CD14-positive monocyte (primary cell): ENCODE measurements at regions of chr1 and their contacts with region 1.

Region 1: DNA sequence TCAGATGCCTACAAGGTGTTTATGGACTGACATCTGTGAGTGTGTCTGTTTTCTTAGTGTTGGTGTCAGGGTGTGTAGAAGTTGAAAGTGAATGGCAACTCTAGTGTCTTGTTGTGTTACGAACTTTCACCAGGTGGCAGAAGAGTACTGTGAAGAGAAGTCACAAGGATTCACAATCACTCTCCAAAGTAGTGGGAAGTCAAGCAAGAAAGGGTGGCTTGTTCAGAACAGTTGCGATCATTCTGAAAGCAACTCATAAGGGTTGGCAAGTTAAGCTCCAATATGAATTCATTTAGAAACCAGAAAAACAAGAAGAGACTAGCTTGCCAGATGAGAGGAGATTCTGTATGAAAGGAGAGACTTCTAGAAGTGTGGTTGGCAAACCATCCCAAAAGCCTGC is 86.1 kb downstream of the FASLG start:
- DNase-seq: peak; percentile 61 to 78 (median 73)
- H3K4me3 ChIP-seq: no peak overlapping the region
- H3K4me3 Mint-ChIP-seq: peak overlapping the region in 1 of 2 donors; percentile 60
- H3K27ac ChIP-seq: no peak overlapping the region
- H3K27ac Mint-ChIP-seq: peak overlapping the region in 5 of 7 donors; percentile 62 to 86 (median 77)
- H3K4me1 ChIP-seq: peaks cover 22 to 29% of the 10 kb centered on the region in 2 donors
- H3K4me1 Mint-ChIP-seq: peaks cover 30% of the 10 kb centered on the region
- H3K27me3 ChIP-seq: no peaks in the 10 kb centered on the region
- H3K27me3 Mint-ChIP-seq: peaks cover 0 to 6% (median 2%) of the 10 kb centered on the region in 3 donors
- CTCF ChIP-seq: peak; percentile 85

Region 2: DNA sequence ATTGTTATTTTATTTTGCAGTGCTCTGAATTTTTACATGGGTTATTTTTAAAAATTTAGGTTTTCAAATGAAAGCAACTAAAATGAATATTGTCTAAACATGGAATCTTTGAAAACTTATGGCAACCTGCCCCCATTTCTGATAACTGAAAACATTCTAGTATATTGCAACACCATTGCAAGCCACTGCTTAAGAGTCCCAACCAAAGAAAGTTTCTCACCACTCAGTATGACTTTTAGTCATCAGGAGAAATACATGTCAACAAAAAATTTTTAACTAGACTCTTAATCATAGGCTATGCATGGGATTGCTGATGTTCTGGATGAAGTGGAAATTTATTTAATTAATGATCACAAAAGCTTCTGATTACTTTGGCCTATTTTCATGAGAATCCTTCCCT is 193.7 kb after region 1 on chr1:
- intact Hi-C with region 1: loop called in 1 of 2 experiments (anchors 10 kb)
- DNase-seq: no peak
- H3K4me3 ChIP-seq: no peak overlapping the region
- H3K4me3 Mint-ChIP-seq: no peak overlapping the region
- H3K27ac ChIP-seq: no peak overlapping the region
- H3K27ac Mint-ChIP-seq: no peak overlapping the region
- H3K4me1 ChIP-seq: peaks cover 11 to 17% of the 10 kb centered on the region in 2 donors
- H3K4me1 Mint-ChIP-seq: peaks cover 22% of the 10 kb centered on the region
- H3K27me3 ChIP-seq: no peaks in the 10 kb centered on the region
- H3K27me3 Mint-ChIP-seq: peaks cover 0 to 3% (median 0%) of the 10 kb centered on the region in 3 donors
- CTCF ChIP-seq: no peak

Region 3: DNA sequence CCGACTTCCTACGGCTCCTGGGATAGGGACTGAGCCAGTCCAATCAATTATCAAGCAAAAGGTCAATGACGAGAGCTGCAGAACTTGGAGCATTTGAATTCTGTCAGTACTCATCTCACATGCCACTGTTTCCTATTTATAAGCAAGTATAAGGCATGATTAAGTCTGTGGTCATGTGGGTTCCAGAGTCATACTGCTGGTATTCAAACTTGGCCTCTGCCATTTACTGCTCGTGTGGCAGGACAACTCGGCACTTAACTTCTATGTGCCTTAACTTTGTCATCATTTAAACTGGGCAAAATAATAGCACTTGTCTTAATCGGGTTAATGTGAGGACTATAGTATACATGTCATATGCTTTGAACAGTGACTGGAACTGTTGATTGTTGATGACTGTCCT is 350.6 kb after region 1 on chr1:
- intact Hi-C with region 1: no loop called
- DNase-seq: no peak
- H3K4me3 ChIP-seq: no peak overlapping the region
- H3K4me3 Mint-ChIP-seq: no peak overlapping the region
- H3K27ac ChIP-seq: no peak overlapping the region
- H3K27ac Mint-ChIP-seq: no peak overlapping the region
- H3K4me1 ChIP-seq: peaks cover 5 to 10% of the 10 kb centered on the region in 2 donors
- H3K4me1 Mint-ChIP-seq: peaks cover 9% of the 10 kb centered on the region
- H3K27me3 ChIP-seq: no peaks in the 10 kb centered on the region
- H3K27me3 Mint-ChIP-seq: peaks cover 0 to 3% (median 0%) of the 10 kb centered on the region in 3 donors
- CTCF ChIP-seq: no peak

Region 4: DNA sequence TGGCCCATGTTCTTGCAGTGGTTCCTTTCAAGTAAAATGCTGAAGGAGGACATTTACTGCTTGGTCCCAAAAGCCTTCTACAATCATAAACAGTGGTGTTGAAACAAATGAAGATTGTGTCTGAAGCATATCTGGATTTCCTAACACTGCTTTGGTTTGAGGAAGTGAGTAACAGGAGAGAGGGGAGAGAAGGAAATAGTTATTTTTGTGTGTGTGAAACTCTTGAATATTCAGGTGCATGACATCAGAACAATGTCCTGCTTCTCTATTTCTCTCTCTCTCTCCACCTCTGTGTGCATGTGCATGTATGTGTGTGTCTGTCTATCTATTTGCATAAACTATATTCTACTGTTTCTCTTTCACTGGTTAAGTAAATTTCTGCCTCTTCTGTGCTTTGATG is 367.1 kb after region 1 on chr1:
- intact Hi-C with region 1: loop called in 1 of 2 experiments (anchors 10 kb)
- DNase-seq: peak; percentile 84 to 91 (median 85)
- H3K4me3 ChIP-seq: no peak overlapping the region
- H3K4me3 Mint-ChIP-seq: peak overlapping the region in 1 of 2 donors; percentile 64
- H3K27ac ChIP-seq: peak overlapping the region in 1 of 2 donors; percentile 83
- H3K27ac Mint-ChIP-seq: peak overlapping the region; percentile 68 to 93 (median 87)
- H3K4me1 ChIP-seq: peaks cover 32 to 48% of the 10 kb centered on the region in 2 donors
- H3K4me1 Mint-ChIP-seq: peaks cover 39% of the 10 kb centered on the region
- H3K27me3 ChIP-seq: no peaks in the 10 kb centered on the region
- H3K27me3 Mint-ChIP-seq: peaks cover 0 to 2% (median 0%) of the 10 kb centered on the region in 3 donors
- CTCF ChIP-seq: no peak

Region 5: DNA sequence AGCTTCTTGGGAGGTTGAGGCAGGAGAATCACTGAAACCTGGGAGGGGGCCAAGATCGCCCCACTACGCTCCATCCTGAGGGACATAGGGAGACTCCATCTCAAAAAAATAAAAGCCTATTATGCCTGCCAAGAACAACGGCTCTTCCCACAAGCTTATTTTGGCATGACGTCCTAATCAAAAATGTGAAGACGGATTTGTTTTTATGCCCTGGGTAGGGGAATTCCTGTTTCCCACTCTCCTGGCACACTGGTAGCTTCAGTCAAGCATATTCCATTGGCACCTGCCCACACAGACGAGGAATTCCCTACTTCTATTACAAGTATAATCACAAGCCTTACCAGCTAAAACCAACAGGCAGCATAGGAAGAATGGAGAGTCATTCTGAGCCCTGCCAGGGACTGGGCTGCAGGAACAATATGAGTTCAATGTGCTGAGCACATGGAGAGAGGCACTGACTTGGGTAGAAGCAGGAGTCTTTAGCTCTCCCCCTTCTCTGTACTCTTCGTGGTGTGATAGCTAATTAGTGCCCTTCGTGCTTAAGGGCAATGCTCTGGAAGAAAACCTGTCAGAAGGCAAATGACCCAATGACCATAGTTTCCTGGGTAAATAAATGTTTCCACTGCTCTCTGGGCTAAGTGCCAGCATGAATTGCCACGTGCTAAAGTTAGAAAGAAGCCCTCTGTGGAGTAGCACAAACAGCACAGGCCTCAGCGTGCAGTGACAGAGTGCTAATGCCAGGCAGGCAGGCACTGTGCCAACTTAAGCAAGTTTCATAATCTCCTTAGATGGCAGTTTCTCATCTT is 445.3 kb after region 1 on chr1:
- intact Hi-C with region 1: loop called in 1 of 2 experiments (anchors 10 kb)
- DNase-seq: peak; percentile 33 to 56 (median 42)
- H3K4me3 ChIP-seq: no peak overlapping the region
- H3K4me3 Mint-ChIP-seq: no peak overlapping the region
- H3K27ac ChIP-seq: peak overlapping the region in 1 of 2 donors; percentile 52
- H3K27ac Mint-ChIP-seq: peak overlapping the region in 5 of 7 donors; percentile 45 to 77 (median 72)
- H3K4me1 ChIP-seq: peaks cover 17 to 22% of the 10 kb centered on the region in 2 donors
- H3K4me1 Mint-ChIP-seq: peaks cover 32% of the 10 kb centered on the region
- H3K27me3 ChIP-seq: no peaks in the 10 kb centered on the region
- H3K27me3 Mint-ChIP-seq: no peaks in the 10 kb centered on the region
- CTCF ChIP-seq: no peak

Region 6: GRCh38 chr1:173420330-173420806 is 675.4 kb after region 1 on chr1:
- intact Hi-C with region 1: loop called (anchors 5 to 10 kb)
- DNase-seq: peak; percentile 72 to 83 (median 73)
- H3K4me3 ChIP-seq: no peak overlapping the region
- H3K4me3 Mint-ChIP-seq: peak overlapping the region in 1 of 2 donors; percentile 58
- H3K27ac ChIP-seq: no peak overlapping the region
- H3K27ac Mint-ChIP-seq: peak overlapping the region in 3 of 7 donors; percentile 51 to 79 (median 62)
- H3K4me1 ChIP-seq: peaks cover 38 to 47% of the 10 kb centered on the region in 2 donors
- H3K4me1 Mint-ChIP-seq: peaks cover 58% of the 10 kb centered on the region
- H3K27me3 ChIP-seq: no peaks in the 10 kb centered on the region
- H3K27me3 Mint-ChIP-seq: peaks cover 0 to 3% (median 0%) of the 10 kb centered on the region in 3 donors
- CTCF ChIP-seq: peak; percentile 91

Region 7: GRCh38 chr1:173824331-173825081 is 1079.5 kb after region 1 on chr1 and contains the starts of genes CENPL and DARS2:
- intact Hi-C with region 1: loop called (anchors 5 kb)
- DNase-seq: peak; percentile 93 to 97 (median 94)
- H3K4me3 ChIP-seq: peak within 1 kb of the TSS; percentile 70 to 99 (median 92)
- H3K4me3 Mint-ChIP-seq: peak within 1 kb of the TSS; percentile 99
- H3K27ac ChIP-seq: peak within 1 kb of the TSS; percentile 91 to 93
- H3K27ac Mint-ChIP-seq: peak within 1 kb of the TSS; percentile 97 to 100 (median 99)
- H3K4me1 ChIP-seq: peaks cover 15 to 26% of the 10 kb centered on the region in 2 donors
- H3K4me1 Mint-ChIP-seq: peaks cover 39% of the 10 kb centered on the region
- H3K27me3 ChIP-seq: no peaks in the 10 kb centered on the region
- H3K27me3 Mint-ChIP-seq: no peaks in the 10 kb centered on the region
- CTCF ChIP-seq: no peak
- polyA plus RNA-seq, gene CENPL: 0.49 to 2.6 (median 0.81) TPM
- polyA plus RNA-seq, gene DARS2: 3.2 to 8.2 (median 6.2) TPM